Dendritic cell treated with granulocyte-macrophage colony-stimulating factor and Interleukin-4, amounts not matched to agents 40 ng/mL and 50 ng/mL, for 4 days (primary cell): ENCODE measurements at regions of chr7 and their contacts with region 1.

Region 1: DNA sequence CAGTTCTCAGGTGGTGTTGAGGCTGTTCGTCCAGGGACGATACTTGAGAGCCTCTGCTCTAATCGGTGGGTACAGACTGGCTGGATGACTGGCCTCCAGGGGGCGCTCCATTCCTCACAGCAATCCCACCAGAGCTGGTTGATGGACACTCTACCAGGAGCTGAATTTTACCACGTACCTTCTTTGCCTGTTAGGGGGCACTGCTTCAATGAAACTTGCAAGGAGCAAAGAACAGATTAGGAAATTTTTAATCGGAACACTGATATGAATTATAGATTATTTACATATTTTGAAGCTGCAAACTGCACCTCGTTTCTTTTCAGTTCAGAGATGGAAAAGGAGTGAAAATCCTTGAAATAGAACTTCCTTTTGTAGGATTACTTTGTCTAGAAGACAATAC is 44.9 kb downstream of the KBTBD2 start:
- H3K4me3 Mint-ChIP-seq: peak overlapping the region; percentile 48
- H3K27ac Mint-ChIP-seq: no peak overlapping the region
- H3K4me1 Mint-ChIP-seq: no peaks in the 10 kb centered on the region
- H3K27me3 Mint-ChIP-seq: no peaks in the 10 kb centered on the region

Region 2: GRCh38 chr7:32803406-32804141 is 43.1 kb before region 1 on chr7:
- intact Hi-C with region 1: no loop called
- H3K4me3 Mint-ChIP-seq: no peak overlapping the region
- H3K27ac Mint-ChIP-seq: no peak overlapping the region
- H3K4me1 Mint-ChIP-seq: no peaks in the 10 kb centered on the region
- H3K27me3 Mint-ChIP-seq: no peaks in the 10 kb centered on the region

Region 3: GRCh38 chr7:32881074-32882017 is 34.6 kb after region 1 on chr7:
- intact Hi-C with region 1: loop called (anchors 5 kb)
- H3K4me3 Mint-ChIP-seq: no peak overlapping the region
- H3K27ac Mint-ChIP-seq: no peak overlapping the region
- H3K4me1 Mint-ChIP-seq: peaks cover 23% of the 10 kb centered on the region
- H3K27me3 Mint-ChIP-seq: no peaks in the 10 kb centered on the region

Region 4: DNA sequence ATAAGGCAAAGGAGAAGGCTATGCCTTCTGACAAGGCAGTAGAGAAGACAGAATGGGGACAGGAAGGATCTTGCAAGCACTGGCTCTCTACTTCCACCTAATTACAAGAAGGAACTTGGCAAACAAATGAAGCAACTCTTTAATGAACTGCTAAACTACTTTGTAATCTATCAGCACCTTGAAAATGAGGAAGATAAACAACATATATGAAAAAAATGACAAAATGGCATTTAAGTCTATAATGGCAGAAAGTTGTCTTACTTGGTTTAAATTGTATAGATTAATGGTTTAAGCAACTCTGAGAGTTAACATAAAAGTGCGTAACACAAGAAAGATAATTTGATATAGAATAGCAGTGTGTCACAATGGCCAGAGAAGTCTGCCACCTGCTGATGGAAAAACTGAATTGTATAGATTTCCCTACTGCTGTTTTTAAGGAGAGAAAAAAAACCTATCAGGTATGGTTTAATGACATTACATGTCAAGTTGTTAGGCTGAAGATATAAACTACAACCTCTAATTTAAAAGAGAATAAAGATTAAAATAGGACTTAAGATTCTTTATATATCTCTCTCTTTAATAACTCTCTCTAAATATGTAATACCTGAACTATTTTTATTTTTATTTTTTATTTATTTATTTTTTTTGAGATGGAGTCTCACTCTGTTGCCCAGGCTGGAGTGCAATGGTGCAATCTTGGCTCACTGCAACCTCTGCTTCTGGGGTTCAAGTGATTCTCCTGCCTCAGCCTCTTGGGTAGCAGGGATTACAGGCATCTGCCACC is 204.0 kb after region 1 on chr7:
- intact Hi-C with region 1: loop called (anchors 2 kb)
- H3K4me3 Mint-ChIP-seq: peak overlapping the region; percentile 57
- H3K27ac Mint-ChIP-seq: peak overlapping the region; percentile 73
- H3K4me1 Mint-ChIP-seq: peaks cover 21% of the 10 kb centered on the region
- H3K27me3 Mint-ChIP-seq: no peaks in the 10 kb centered on the region